Heart right ventricle (tissue), 16 donors: ENCODE measurements at regions of chr1 and their contacts with region 1.

Region 1: GRCh38 chr1:39446986-39447567 is 44.4 kb upstream of the BMP8A start:
- DNase-seq: no peak
- ATAC-seq: no peak
- H3K4me3 ChIP-seq: no peak overlapping the region
- H3K27ac ChIP-seq: peak overlapping the region in 2 of 10 donors; percentile 5 to 57
- H3K4me1 ChIP-seq: peaks cover 0 to 14% (median 0%) of the 10 kb centered on the region in 9 donors
- H3K27me3 ChIP-seq: no peaks in the 10 kb centered on the region
- CTCF ChIP-seq: no peak

Region 2: GRCh38 chr1:39310015-39310414 is 137.1 kb before region 1 on chr1:
- intact Hi-C with region 1: loop called in 1 of 10 experiments (anchors 5 kb)
- DNase-seq: no peak
- ATAC-seq: no peak
- H3K4me3 ChIP-seq: no peak overlapping the region
- H3K27ac ChIP-seq: no peak overlapping the region
- H3K4me1 ChIP-seq: no peaks in the 10 kb centered on the region
- H3K27me3 ChIP-seq: no peaks in the 10 kb centered on the region
- CTCF ChIP-seq: no peak

Region 3: GRCh38 chr1:39326832-39327231 is 120.2 kb before region 1 on chr1:
- intact Hi-C with region 1: loop called in 3 of 10 experiments (anchors 10 kb)
- DNase-seq: no peak
- ATAC-seq: no peak
- H3K4me3 ChIP-seq: no peak overlapping the region
- H3K27ac ChIP-seq: no peak overlapping the region
- H3K4me1 ChIP-seq: peaks cover 0 to 2% (median 0%) of the 10 kb centered on the region in 9 donors
- H3K27me3 ChIP-seq: no peaks in the 10 kb centered on the region
- CTCF ChIP-seq: no peak

Region 4: GRCh38 chr1:39332291-39332690 is 114.8 kb before region 1 on chr1:
- intact Hi-C with region 1: loop called in 3 of 10 experiments (anchors 10 kb)
- DNase-seq: no peak
- ATAC-seq: no peak
- H3K4me3 ChIP-seq: no peak overlapping the region
- H3K27ac ChIP-seq: no peak overlapping the region
- H3K4me1 ChIP-seq: peaks cover 0 to 13% (median 0%) of the 10 kb centered on the region in 9 donors
- H3K27me3 ChIP-seq: no peaks in the 10 kb centered on the region
- CTCF ChIP-seq: no peak

Region 5: DNA sequence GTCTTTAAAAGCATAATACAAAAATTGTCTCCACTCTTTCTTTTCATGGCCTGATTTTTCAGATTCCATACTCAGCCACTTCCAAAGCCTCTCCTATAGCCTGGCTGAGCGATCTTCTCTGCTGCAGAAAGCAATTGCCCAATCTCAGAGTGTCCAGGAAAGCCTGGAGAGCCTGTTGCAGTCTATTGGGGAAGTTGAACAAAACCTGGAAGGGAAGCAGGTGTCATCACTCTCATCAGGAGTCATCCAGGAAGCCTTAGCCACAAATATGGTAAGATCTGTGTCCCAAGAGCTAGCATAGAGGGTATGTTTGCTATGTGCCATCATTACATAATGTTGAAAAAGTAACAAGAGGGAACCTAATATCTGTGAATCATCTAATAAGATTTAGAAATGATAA is 86.3 kb before region 1 on chr1:
- intact Hi-C with region 1: loop called in 1 of 10 experiments (anchors 10 kb)
- DNase-seq: no peak
- ATAC-seq: no peak
- H3K4me3 ChIP-seq: no peak overlapping the region
- H3K27ac ChIP-seq: no peak overlapping the region
- H3K4me1 ChIP-seq: peaks cover 0 to 26% (median 10%) of the 10 kb centered on the region in 9 donors
- H3K27me3 ChIP-seq: no peaks in the 10 kb centered on the region
- CTCF ChIP-seq: no peak

Region 6: DNA sequence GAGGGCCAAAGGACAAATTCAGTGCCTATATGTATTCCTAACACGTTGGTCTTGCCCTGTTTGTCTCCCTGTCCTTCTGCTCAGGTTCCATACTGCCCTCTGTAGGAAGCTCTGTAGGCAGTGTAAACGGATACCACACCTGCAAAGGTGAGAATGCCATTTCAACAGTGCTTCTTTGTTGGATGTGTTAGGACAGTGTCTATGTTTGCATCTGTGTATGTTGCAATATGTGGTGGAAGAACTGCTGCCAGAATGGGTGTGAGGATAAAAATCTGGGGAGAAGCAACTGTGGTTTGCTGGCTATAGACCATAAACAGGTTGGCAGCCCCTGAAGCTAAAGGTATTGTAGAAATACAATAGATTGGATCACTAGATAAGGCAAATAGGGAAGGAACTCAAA is 68.7 kb before region 1 on chr1:
- intact Hi-C with region 1: no loop called
- DNase-seq: no peak
- ATAC-seq: no peak
- H3K4me3 ChIP-seq: no peak overlapping the region
- H3K27ac ChIP-seq: no peak overlapping the region
- H3K4me1 ChIP-seq: peaks cover 0 to 10% (median 7%) of the 10 kb centered on the region in 9 donors
- H3K27me3 ChIP-seq: no peaks in the 10 kb centered on the region
- CTCF ChIP-seq: peak in 5 of 9 donors; percentile 24 to 35 (median 35)